ENCODE measurements at regions of chr1 and their contacts with region 1.

Region 1: DNA sequence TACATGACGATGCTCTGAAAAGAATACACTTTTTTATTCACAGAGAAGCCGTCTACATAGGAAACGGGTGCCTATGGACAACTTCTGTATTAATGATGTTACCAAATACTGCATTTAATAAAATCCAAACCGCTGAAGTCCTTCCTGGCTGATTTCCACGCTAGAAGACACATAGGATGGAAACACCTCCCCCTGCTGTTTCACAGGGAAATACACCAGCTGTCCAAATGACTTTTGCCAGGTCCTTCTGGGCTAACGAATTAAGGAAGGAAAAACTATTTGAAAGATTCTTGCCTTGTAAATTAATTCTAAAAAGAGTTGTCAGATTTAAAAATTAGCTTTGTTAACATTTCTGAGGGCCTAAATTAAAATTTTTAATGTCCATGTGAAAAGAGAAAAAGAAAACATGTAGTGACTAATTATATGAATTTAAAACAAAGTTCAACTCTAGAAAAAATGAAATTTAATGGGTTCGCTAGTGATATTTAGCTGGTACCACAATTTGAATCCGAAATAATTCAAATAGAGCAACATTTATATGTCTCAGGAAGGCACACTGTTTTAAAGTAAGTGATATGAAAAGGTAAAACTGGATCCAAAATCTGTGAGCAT is 146.0 kb downstream of the RERE start:
- DNase-seq: peak in 1 of 2 donors; percentile 69
- H3K4me3 ChIP-seq: no peak overlapping the region
- H3K27ac ChIP-seq: no peak overlapping the region
- H3K4me1 ChIP-seq: peaks cover 5 to 8% of the 10 kb centered on the region in 2 donors
- H3K27me3 ChIP-seq: no peaks in the 10 kb centered on the region
- CTCF ChIP-seq: peak; percentile 77 to 84 (median 78)

Region 2: GRCh38 chr1:8560611-8561544 is 110.5 kb before region 1 on chr1:
- intact Hi-C with region 1: loop called (anchors 2 kb)
- DNase-seq: no peak
- H3K4me3 ChIP-seq: no peak overlapping the region
- H3K27ac ChIP-seq: no peak overlapping the region
- H3K4me1 ChIP-seq: peaks cover 0 to 5% of the 10 kb centered on the region in 2 donors
- H3K27me3 ChIP-seq: no peaks in the 10 kb centered on the region
- CTCF ChIP-seq: peak; percentile 84 to 87 (median 87)

Region 3: GRCh38 chr1:8598060-8598724 is 73.2 kb before region 1 on chr1:
- intact Hi-C with region 1: no loop called
- DNase-seq: peak in 1 of 2 donors; percentile 69
- H3K4me3 ChIP-seq: peak overlapping the region in 1 of 2 donors; percentile 51
- H3K27ac ChIP-seq: peak overlapping the region; percentile 61 to 64
- H3K4me1 ChIP-seq: peaks cover 0 to 10% of the 10 kb centered on the region in 2 donors
- H3K27me3 ChIP-seq: no peaks in the 10 kb centered on the region
- CTCF ChIP-seq: peak; percentile 26 to 57 (median 40)

Region 4: DNA sequence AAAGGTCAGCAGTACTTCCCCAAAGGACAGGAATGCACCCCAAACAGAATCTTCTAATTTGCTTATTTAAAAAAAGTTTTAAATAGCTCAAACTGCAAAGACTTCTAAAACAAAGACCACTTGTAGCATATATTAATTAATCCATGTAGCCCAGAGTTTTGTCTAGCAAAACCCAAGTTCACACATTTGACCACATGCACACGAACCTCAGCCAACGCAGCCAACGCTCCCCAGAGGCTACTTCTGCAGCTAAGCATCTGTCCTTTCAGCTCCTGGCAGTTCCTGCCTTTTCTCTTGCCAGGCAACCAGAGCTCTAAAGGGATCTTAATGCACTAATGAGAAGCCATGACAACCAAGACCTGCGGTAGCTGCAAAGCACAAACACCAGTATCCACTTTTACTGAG is 56.4 kb after region 1 on chr1:
- intact Hi-C with region 1: loop called (anchors 5 kb)
- DNase-seq: no peak
- H3K4me3 ChIP-seq: no peak overlapping the region
- H3K27ac ChIP-seq: no peak overlapping the region
- H3K4me1 ChIP-seq: no peaks in the 10 kb centered on the region
- H3K27me3 ChIP-seq: no peaks in the 10 kb centered on the region
- CTCF ChIP-seq: no peak

Region 5: DNA sequence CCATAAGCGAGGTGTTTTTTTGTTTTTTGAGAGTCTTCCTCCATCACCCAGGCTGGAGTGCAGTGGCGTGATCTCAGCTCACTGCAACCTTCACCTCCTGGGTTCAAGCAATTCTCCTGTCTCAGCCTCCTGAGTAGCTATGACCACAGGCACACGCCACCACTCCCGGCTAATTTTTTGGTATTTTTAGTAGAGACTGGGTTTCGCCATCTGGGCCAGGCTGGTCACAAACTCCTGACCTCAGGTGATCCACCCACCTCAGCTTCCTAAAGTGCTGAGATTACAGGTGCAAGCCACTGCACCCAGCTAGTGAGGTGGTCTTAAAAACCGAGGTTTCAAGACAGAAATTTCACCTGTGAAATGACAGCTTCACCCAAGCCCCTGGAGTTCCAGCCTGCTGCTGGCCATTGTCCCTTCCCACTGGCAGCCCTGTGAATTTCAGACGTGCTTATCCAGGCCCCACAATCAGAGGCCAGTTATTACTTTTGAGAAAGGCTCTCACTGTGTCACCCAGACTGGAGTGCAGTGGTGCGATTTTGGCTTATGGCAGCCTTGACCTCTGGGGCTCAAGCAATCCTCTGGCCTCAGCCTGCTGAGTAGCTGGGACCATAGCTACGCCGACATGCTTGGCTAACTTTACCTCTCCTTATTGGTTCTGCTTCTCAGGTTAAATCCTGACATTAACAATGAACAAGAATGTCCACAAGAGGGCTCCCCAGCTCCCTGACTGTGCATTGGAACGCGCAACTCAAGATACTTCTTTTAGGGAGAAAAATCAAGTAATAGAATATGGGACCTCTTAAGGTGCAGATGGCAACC is 187.7 kb after region 1 on chr1:
- intact Hi-C with region 1: no loop called
- DNase-seq: no peak
- H3K4me3 ChIP-seq: no peak overlapping the region
- H3K27ac ChIP-seq: peak overlapping the region; percentile 56 to 64
- H3K4me1 ChIP-seq: peaks cover 6 to 25% of the 10 kb centered on the region in 2 donors
- H3K27me3 ChIP-seq: no peaks in the 10 kb centered on the region
- CTCF ChIP-seq: peak; percentile 67 to 69 (median 68)

Region 6: GRCh38 chr1:8992936-8993687 is 321.7 kb after region 1 on chr1:
- intact Hi-C with region 1: no loop called
- DNase-seq: no peak
- H3K4me3 ChIP-seq: no peak overlapping the region
- H3K27ac ChIP-seq: no peak overlapping the region
- H3K4me1 ChIP-seq: no peaks in the 10 kb centered on the region
- H3K27me3 ChIP-seq: no peaks in the 10 kb centered on the region
- CTCF ChIP-seq: peak in 1 of 3 experiments; percentile 14

Region 7: GRCh38 chr1:9239622-9240401 is 568.4 kb after region 1 on chr1:
- intact Hi-C with region 1: no loop called
- DNase-seq: peak in 1 of 2 donors; percentile 77
- H3K4me3 ChIP-seq: peak overlapping the region; percentile 18 to 39
- H3K27ac ChIP-seq: peak overlapping the region; percentile 78 to 79
- H3K4me1 ChIP-seq: peaks cover 11 to 63% of the 10 kb centered on the region in 2 donors
- H3K27me3 ChIP-seq: no peaks in the 10 kb centered on the region
- CTCF ChIP-seq: no peak

Measured in ascending aorta (tissue), 2 donors.